ENCODE measurements at regions of chr15 and their contacts with region 1.

Region 1: GRCh38 chr15:62439543-62440016 is 274.5 kb upstream of the C2CD4B start:
- DNase-seq: no peak
- H3K4me3 ChIP-seq: no peak overlapping the region
- H3K27ac ChIP-seq: peak overlapping the region in 2 of 4 donors; percentile 7 to 36
- H3K4me1 ChIP-seq: peaks cover 0 to 39% (median 29%) of the 10 kb centered on the region in 4 donors
- H3K27me3 ChIP-seq: no peaks in the 10 kb centered on the region
- CTCF ChIP-seq: no peak
- EP300 ChIP-seq: peak in 2 of 4 donors; percentile 40 to 64
- POLR2A ChIP-seq: no peak

Region 2: DNA sequence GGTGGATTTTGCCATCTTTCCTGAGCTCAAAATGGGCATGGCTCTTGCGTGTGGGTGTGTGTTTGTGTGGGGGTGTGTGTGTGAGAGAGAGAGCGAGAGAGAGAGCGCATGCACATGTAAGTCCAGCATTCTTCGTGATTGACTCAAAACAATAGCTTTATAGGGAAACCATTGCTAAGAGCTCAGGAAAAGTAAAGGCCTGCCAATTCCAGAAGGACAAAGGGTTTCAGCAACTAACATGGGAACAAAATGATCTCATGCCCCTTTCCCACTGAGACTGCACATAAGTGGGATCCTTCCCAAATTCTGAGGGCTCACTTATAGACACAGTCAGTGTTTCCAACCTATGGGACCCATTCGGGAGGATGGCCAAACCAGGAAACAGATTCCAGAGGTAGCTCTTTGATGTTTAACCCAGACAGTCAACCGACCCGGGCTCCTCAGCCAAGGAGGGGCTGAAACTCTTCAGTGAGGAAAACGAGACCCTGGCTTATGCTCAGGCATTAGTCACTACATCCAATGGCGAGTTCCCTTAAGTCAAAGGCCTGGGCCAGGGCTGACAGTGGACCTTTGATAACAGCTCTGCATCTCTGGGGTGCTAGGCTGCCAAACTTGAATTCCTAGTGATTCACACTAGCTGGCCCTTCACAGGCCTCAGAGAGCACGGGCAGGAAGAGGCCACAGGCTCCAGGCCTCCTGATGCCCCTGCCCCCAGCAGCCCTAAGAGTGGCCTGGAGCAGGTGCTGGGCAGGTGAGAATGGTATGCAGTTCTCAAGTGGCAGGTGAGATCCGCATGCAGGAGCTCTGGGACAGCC is 30.5 kb after region 1 on chr15:
- intact Hi-C with region 1: loop called (anchors 5 kb)
- DNase-seq: peak; percentile 87
- H3K4me3 ChIP-seq: no peak overlapping the region
- H3K27ac ChIP-seq: peak overlapping the region; percentile 48 to 77 (median 71)
- H3K4me1 ChIP-seq: peaks cover 0 to 51% (median 49%) of the 10 kb centered on the region in 4 donors
- H3K27me3 ChIP-seq: no peaks in the 10 kb centered on the region
- CTCF ChIP-seq: no peak
- EP300 ChIP-seq: no peak
- POLR2A ChIP-seq: no peak

Measured in sigmoid colon (tissue), 7 donors.